Heart right ventricle (tissue), 16 donors: ENCODE measurements at regions of chrX and their contacts with region 1.

Region 1: DNA sequence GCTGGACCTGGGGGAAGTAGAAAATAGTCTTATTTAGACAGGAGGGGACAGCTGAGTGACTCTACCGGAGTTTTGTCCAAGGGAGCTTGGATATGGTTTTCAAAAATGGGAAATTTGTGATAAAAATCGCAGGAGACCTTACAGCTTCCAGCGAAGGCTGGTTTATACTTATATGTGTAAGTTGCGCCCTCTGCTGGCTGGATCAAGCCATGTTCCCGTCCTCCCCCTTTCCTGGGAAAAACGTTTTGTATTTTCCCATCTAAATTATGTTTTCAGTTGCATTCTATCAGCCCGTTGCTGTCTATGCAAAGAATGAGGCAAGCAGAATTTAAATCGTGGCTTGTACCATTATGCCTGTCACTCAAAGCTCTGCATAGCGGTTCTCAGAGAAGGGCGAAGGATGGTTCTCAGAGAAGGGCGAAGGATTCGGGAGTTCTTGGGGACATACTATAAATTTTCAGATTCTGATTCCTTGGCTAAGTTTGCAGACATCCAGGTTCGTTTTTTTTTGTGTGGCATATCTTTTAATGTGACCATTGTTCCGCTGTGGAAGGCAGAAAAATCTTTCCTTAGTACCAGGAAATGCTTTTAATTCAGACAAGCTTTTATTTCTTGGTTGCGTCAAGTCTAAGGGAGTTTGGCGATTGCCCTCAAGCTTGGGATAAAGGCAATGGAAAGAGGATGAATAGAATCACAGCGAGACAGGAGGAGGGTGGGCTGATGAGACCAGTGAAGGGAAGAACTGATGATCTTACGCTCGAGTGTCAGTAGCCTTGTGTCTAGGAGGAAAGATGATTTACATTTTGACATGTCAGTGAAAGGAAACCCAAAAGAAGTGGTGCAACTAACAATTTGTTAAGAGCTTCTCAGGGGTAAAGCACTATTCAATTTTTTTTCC is 128.5 kb upstream of the ARX start:
- DNase-seq: peak; percentile 26 to 30
- ATAC-seq: peak in 4 of 8 donors; percentile 35 to 55 (median 46)
- H3K4me3 ChIP-seq: peak overlapping the region in 1 of 10 donors; percentile 28
- H3K27ac ChIP-seq: no peak overlapping the region
- H3K4me1 ChIP-seq: no peaks in the 10 kb centered on the region
- H3K27me3 ChIP-seq: peaks cover 0 to 51% (median 0%) of the 10 kb centered on the region in 7 donors
- CTCF ChIP-seq: peak in 8 of 9 donors; percentile 41 to 83 (median 66)

Region 2: DNA sequence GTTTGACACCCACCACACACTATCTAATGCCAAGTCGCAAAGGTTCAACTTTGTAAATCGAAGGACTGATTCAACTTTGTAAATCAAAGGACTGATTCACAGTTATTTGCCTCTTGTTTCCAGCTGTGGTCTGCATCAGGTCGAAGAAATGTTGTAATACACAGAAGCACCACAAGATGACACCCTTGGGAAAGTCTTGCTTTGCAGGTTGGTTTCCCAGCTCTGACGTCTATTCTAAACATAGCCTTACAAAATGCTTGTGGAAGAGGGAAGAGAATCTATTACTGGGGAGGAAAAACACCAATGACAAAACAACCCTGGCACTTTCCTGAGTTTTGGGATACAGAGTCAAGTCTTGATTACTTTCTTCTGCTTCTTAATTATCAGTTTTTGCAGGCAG is 748.5 kb before region 1 on chrX:
- intact Hi-C with region 1: loop called in 2 of 10 experiments (anchors 5 to 10 kb)
- DNase-seq: peak in 1 of 2 donors; percentile 64
- ATAC-seq: peak; percentile 61 to 87 (median 82)
- H3K4me3 ChIP-seq: no peak overlapping the region
- H3K27ac ChIP-seq: peak overlapping the region in 3 of 10 donors; percentile 19 to 56 (median 44)
- H3K4me1 ChIP-seq: peaks cover 0 to 7% (median 0%) of the 10 kb centered on the region in 9 donors
- H3K27me3 ChIP-seq: peaks cover 0 to 59% (median 0%) of the 10 kb centered on the region in 7 donors
- CTCF ChIP-seq: peak; percentile 46 to 79 (median 74)

Region 3: GRCh38 chrX:24748202-24748843 is 396.0 kb before region 1 on chrX:
- intact Hi-C with region 1: loop called in 8 of 10 experiments (anchors 2 to 10 kb)
- DNase-seq: no peak
- ATAC-seq: no peak
- H3K4me3 ChIP-seq: no peak overlapping the region
- H3K27ac ChIP-seq: no peak overlapping the region
- H3K4me1 ChIP-seq: no peaks in the 10 kb centered on the region
- H3K27me3 ChIP-seq: no peaks in the 10 kb centered on the region
- CTCF ChIP-seq: no peak

Region 4: GRCh38 chrX:24759786-24760185 is 384.5 kb before region 1 on chrX:
- intact Hi-C with region 1: loop called in 7 of 10 experiments (anchors 5 to 10 kb)
- DNase-seq: no peak
- ATAC-seq: no peak
- H3K4me3 ChIP-seq: no peak overlapping the region
- H3K27ac ChIP-seq: no peak overlapping the region
- H3K4me1 ChIP-seq: peaks cover 0 to 9% (median 0%) of the 10 kb centered on the region in 9 donors
- H3K27me3 ChIP-seq: no peaks in the 10 kb centered on the region
- CTCF ChIP-seq: no peak

Region 5: DNA sequence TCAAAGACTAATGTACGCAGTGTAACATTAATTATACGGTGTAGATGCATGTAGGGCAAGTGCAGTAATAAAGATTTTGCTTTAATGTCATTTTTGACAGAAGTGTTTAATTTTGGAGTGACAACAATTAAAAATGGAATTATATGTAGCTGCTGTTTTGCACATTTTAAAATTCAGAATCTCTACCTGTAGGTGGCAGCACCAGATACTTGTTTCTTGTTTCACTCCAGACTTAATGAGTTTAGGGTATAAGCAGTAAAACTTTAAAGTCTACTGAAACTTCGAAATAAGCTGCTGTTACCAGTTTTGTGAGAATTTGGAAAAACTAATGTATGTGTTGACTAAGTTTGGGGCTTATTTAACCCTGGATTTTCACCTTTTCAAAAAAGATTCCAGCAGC is 305.7 kb before region 1 on chrX:
- intact Hi-C with region 1: loop called in 9 of 10 experiments (anchors 1 to 10 kb)
- DNase-seq: peak in 1 of 2 donors; percentile 4
- ATAC-seq: no peak
- H3K4me3 ChIP-seq: no peak overlapping the region
- H3K27ac ChIP-seq: no peak overlapping the region
- H3K4me1 ChIP-seq: peaks cover 0 to 7% (median 0%) of the 10 kb centered on the region in 9 donors
- H3K27me3 ChIP-seq: peaks cover 0 to 35% (median 0%) of the 10 kb centered on the region in 7 donors
- CTCF ChIP-seq: peak; percentile 15 to 66 (median 56)

Region 6: GRCh38 chrX:24846551-24847157 is 297.6 kb before region 1 on chrX:
- intact Hi-C with region 1: loop called in 4 of 10 experiments (anchors 5 to 10 kb)
- DNase-seq: no peak
- ATAC-seq: no peak
- H3K4me3 ChIP-seq: no peak overlapping the region
- H3K27ac ChIP-seq: no peak overlapping the region
- H3K4me1 ChIP-seq: peaks cover 0 to 3% (median 0%) of the 10 kb centered on the region in 9 donors
- H3K27me3 ChIP-seq: peaks cover 0 to 18% (median 0%) of the 10 kb centered on the region in 7 donors
- CTCF ChIP-seq: no peak

Region 7: DNA sequence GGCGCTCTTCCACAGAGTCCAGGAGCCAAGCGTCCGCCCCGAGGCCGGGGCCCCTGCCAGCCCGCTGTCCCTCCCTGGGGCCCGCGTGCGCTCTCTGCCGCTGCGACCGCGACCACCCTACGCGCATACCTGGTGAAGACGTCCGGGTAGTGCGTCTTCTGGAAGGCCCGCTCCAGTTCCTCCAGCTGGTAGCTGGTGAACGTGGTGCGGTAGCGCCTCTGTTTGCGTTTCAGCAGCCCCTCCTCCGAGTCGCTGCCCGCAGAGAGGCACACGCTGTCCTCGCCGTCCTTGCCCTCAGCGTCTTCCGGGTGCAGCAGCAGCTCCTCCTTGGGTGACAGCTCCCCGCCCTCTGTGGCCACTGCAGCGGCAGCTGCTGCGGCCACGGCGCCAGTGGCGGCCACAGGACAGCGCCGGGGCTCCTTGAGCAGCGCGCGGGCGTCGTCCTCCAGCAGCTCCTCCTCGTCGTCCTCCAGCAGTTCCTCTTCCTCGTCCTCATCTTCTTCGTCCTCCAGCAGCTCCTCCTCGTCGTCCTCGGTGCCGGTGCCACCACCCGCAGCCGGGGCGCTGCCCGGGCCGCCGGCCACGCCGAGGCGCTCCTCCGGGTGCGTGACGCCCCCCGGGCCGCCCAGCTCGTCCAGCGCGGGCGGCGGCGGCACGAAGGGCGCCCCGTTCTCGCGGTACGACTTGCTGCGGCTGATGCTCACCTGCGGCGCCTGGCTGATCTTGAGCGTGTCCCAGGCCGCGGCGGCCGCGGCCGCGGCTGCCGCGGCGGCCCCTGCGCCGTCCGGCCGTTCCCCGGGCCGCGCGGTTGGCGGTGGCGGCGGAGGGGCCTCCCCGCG is 131.3 kb before region 1 on chrX:
- intact Hi-C with region 1: no loop called
- DNase-seq: no peak
- ATAC-seq: no peak
- H3K4me3 ChIP-seq: peak overlapping the region in 8 of 10 donors; percentile 5 to 32 (median 13)
- H3K27ac ChIP-seq: no peak overlapping the region
- H3K4me1 ChIP-seq: peaks cover 0 to 25% (median 8%) of the 10 kb centered on the region in 9 donors
- H3K27me3 ChIP-seq: peaks cover 6 to 98% (median 92%) of the 10 kb centered on the region in 7 donors
- CTCF ChIP-seq: no peak